Right ventricle myocardium superior (tissue), 1 donor: ENCODE measurements at regions of chr17 and their contacts with region 1.

Region 1: DNA sequence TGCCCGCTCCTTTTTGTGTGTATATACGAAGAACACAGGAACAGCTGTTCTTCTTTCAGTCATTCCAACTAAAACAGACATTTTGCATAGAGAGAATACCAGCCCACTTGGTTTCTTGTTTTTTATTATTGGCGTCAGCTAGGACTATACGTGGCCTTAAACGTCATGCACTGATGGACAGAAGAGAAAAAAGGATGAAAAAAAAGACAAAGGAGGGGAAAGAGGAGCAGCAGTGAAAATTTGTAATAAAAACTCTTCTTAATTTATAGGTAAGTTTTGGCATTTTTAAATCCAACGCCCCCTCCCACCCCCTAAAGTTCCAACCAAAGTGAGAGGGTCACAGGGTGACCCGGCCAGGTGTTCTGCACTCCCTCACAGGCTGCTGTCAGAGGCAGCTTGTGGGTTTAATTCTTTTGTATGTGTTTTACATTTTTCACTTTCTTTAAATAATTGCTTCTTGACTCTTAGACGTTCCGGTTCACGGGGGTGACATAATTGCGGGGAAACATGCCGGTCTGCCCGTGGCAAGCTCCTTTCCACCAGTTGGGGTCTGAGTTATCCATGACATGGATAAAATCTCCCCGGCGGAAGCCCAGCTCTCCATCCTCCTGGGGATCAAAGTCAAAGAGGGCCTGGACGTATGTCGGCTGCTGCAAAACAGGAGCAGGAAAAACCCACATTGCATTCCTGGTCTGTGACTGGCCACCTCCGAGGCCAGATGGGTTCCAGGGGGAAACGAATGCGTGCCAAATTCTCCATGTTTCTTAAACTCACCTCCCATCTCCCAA is 30.9 kb upstream of the SLC25A19 start:
- DNase-seq: no peak
- ATAC-seq: no peak

Region 2: DNA sequence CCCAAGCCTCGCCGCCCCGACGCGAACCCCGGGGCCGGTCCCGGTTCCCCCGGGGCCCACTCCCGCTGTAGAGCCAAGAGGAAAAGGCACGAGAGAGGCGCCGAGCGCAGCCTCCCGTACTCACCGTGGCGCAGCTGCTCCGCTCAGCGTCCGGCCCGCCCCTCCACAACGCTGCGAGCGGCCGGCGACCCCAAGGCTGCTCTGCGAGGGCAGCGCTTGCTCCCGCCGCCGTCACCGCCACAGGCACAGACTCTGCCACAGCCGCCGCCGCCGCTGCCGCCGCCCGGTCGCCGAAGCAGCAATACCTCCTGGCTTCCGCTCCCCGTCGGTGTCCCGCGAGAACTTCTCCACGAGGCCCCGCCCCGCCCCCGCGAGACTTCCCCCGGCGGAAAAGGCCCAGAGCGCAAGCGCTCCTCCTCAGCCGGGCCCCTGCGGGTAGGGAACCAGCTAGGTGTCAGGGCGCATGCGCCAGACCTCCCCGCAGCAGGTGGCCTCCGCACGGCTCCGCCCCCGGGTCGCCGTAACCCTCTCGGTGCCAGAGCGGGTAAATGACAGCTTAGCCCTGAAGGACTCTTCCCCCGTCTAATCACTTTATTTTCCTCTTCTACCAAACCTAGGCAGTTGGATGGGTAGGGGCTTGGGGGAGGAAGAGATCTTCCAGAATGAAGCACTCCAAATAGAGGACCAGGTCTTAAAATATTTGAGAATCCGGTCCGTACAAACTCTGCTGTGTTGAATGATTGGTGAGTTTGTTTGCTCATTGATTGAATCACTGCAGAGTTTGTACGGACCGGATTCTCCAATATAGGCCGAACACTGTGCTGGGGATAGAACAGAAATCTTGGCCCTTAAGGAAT is 85.5 kb after region 1 on chr17 and contains the start of gene GRB2:
- intact Hi-C with region 1: loop called (anchors 2 kb)
- DNase-seq: peak; percentile 99
- ATAC-seq: peak; percentile 97
- total RNA-seq, gene GRB2: 53.1 TPM

Region 3: DNA sequence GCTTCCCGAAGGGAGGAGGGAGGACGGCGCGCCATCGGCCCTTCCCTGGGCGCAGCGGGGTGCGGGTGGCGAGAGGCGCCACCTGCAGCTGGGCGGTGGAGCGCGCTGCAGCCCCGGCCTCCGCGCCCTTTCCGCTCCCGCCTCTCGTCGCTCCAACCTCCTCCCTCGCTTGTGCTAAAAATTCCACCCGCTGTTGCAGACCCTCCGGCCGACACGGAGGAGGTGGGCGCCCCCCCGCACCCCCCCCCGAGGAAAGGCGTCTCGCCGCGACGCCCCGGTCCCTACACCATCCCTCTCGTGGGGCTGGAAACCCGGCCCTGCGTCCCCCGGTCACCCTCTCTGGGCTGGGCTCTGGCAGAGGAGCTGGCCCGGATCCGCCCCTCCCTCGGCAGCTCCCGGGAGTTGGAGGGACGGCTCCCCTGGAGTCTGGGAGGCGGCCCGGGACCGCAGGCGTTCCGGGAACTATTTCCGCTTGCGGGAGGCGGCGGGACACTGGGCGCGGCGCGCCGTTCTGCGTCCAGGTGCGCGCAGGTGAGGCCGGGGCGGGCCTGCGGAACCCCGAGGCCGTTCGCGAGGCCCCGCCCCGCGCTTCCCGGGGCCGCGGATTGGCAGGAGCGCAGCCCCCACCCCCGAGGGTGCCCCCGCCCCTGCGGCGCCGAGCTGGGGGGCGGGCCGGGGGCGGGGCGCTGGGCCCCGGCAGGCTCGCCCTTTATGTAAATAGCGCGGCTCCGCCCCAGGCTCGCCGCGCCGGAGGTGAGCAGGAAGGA is 205.0 kb after region 1 on chr17 and contains the start of gene LLGL2:
- intact Hi-C with region 1: loop called (anchors 10 kb)
- DNase-seq: peak; percentile 84
- ATAC-seq: peak; percentile 91
- total RNA-seq, gene LLGL2: 3.6 TPM